Heart left ventricle (tissue), 16 donors: ENCODE measurements at regions of chr2 and their contacts with region 1.

Region 1: GRCh38 chr2:48600204-48600813 is 17.3 kb upstream of the GTF2A1L start:
- DNase-seq: no peak
- ATAC-seq: peak in 2 of 4 donors; percentile 39 to 63
- H3K4me3 ChIP-seq: no peak overlapping the region
- H3K27ac ChIP-seq: no peak overlapping the region
- H3K4me1 ChIP-seq: no peaks in the 10 kb centered on the region
- H3K27me3 ChIP-seq: no peaks in the 10 kb centered on the region
- CTCF ChIP-seq: peak; percentile 51 to 80 (median 66)
- POLR2A ChIP-seq: no peak

Region 2: DNA sequence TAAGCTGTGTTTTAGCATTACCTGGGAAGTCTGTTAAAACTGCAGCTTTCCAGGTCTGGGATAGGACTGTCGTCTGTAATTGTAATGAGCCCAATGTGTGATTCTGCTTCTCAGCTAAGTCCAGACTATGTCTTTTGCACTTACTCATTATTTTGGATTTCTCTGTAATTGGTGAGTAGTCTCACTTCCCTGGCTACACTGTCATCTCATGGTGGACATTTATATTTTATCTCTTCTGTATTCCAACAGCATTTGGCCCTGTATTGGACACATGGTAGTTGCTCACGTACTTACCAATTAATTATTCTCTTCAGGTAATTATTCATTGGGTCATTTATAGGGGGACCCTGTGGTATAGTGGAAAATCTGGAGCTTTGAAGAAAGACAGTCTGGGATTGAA is 127.3 kb after region 1 on chr2:
- intact Hi-C with region 1: loop called in 3 of 10 experiments (anchors 5 to 10 kb)
- DNase-seq: no peak
- ATAC-seq: peak in 1 of 4 donors; percentile 30
- H3K4me3 ChIP-seq: no peak overlapping the region
- H3K27ac ChIP-seq: peak overlapping the region in 1 of 12 donors; percentile 60
- H3K4me1 ChIP-seq: peaks cover 0 to 14% (median 3%) of the 10 kb centered on the region in 12 donors
- H3K27me3 ChIP-seq: no peaks in the 10 kb centered on the region
- CTCF ChIP-seq: peak in 2 of 12 donors; percentile 22 to 41
- POLR2A ChIP-seq: no peak

Region 3: DNA sequence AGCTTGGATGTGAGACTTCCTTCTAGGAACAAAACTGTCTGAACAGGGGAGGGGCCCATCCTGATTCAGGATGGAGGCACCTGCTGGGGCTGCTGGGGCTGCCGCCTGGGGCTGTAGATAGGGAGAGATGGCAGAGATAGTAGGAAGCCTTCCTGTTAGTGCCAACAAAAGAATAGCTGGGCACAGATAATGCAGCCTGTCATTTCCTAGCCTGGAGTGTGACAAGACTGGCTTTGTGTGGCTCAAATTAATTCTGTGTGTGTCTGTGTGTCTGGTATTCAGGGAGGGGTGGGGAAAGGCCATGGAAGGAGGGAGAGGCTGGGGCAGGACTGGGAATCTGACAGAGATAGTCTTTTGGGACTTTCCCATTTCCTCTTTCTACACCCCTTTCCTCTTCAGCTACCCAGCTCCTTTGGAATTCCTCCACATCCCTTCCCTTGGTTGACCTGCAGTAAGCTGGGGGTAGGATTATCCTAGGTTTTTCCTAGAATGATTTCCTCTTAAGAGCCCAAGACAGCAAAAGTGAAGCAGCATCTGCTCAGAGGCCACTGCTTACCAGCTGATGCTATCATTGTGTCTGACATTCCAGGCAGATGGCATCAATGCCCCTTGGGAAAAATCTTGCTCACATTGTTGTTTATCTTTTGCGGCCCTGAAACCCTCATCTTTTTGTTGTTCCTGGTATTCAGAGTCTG is 300.2 kb after region 1 on chr2:
- intact Hi-C with region 1: loop called in 1 of 10 experiments (anchors 10 kb)
- DNase-seq: no peak
- ATAC-seq: no peak
- H3K4me3 ChIP-seq: no peak overlapping the region
- H3K27ac ChIP-seq: no peak overlapping the region
- H3K4me1 ChIP-seq: no peaks in the 10 kb centered on the region
- H3K27me3 ChIP-seq: no peaks in the 10 kb centered on the region
- CTCF ChIP-seq: no peak
- POLR2A ChIP-seq: no peak

Region 4: DNA sequence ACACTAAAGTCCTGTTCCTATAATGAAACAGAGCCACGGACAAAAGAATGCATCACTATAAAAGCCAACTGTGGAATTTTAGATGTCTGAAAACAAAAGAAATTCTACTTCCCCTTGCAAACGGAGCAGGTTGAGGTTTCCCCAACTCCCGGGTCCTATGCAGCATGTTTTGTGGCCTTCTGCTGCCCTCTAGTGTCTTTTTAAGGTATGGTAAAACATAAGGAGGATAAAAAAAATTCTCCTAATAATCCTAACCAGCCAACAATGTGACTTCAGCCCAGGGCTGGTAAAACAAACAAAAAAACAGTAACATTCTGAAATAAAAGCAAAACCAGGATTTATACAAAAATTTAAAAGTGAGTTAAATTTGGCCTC is 1892.2 kb after region 1 on chr2:
- intact Hi-C with region 1: loop called in 2 of 10 experiments (anchors 5 kb)
- DNase-seq: peak in 3 of 5 donors; percentile 15 to 26 (median 20)
- ATAC-seq: peak in 3 of 4 donors; percentile 72 to 88 (median 76)
- H3K4me3 ChIP-seq: peak overlapping the region in 7 of 12 donors; percentile 3 to 44 (median 20)
- H3K27ac ChIP-seq: no peak overlapping the region
- H3K4me1 ChIP-seq: peaks cover 0 to 13% (median 6%) of the 10 kb centered on the region in 12 donors
- H3K27me3 ChIP-seq: peaks cover 0 to 16% (median 0%) of the 10 kb centered on the region in 9 donors
- CTCF ChIP-seq: peak; percentile 49 to 80 (median 68)
- POLR2A ChIP-seq: no peak